ENCODE measurements at regions of chr22 and their contacts with region 1.

Region 1: GRCh38 chr22:32796865-32797573 is 4.5 kb upstream of the TIMP3 start:
- DNase-seq: peak; percentile 64
- ATAC-seq: peak; percentile 65
- H3K4me3 Mint-ChIP-seq: no peak overlapping the region
- H3K27ac Mint-ChIP-seq: no peak overlapping the region
- H3K4me1 Mint-ChIP-seq: no peaks in the 10 kb centered on the region
- H3K27me3 Mint-ChIP-seq: peaks cover 52% of the 10 kb centered on the region

Region 2: DNA sequence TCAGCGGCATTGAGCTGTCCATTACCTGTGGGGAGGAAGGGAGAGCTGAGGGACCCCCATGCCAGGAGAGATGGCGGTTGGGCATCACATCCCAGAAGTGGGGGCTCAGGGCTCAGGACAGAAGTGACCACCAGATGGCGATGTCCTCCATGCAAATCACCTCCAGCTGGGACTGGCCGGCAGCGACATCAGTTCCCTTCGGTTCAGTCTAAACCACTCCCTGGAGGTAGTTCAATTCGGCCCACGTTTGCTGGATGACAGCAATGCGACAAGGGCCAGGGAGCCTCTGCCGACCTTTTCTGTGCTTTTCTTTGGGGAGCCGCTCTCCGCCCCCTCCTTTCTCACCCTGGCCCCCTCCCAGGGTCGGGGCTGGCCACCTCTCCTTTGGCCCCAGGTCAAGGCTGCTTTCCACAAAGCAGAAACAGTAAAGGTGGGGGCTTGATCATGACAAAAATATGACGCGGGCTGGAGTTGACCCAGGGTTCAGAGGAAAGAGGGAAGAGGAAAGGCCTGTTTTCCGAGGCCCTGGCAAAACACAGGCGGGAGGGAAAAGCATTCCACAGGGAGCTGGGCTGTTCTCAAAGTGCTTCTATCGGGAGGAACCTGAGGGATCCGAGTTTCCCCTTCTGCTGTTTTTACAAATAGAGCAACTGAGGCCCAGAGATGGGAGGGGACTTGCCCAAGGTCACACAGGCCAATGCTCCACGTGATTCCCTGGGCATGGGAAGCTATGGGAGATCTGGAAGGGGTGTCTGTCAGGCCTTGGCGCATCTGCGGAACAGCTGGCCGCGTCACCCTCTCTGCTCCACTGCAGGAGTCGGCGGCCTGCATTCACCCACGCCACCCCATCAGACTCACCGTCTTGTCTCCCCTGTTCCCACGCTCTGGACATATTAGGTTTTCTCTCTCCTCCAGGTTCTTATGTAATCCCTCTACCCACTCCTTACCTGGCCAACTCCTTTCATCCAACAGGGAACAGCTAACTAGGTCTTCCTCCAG is 267.7 kb before region 1 on chr22:
- CTCF ChIA-PET with region 1: interaction called, 41 read pairs
- DNase-seq: peak; percentile 77
- ATAC-seq: peak; percentile 76
- H3K4me3 Mint-ChIP-seq: no peak overlapping the region
- H3K27ac Mint-ChIP-seq: no peak overlapping the region
- H3K4me1 Mint-ChIP-seq: no peaks in the 10 kb centered on the region
- H3K27me3 Mint-ChIP-seq: peaks cover 2% of the 10 kb centered on the region

Region 3: GRCh38 chr22:32628628-32629572 is 168.1 kb before region 1 on chr22:
- CTCF ChIA-PET with region 1: interaction called, 11 read pairs
- DNase-seq: no peak
- ATAC-seq: no peak
- H3K4me3 Mint-ChIP-seq: no peak overlapping the region
- H3K27ac Mint-ChIP-seq: no peak overlapping the region
- H3K4me1 Mint-ChIP-seq: peaks cover 31% of the 10 kb centered on the region
- H3K27me3 Mint-ChIP-seq: peaks cover 18% of the 10 kb centered on the region

Region 4: GRCh38 chr22:32660292-32660691 is 136.7 kb before region 1 on chr22:
- CTCF ChIA-PET with region 1: interaction called, 101 read pairs
- DNase-seq: peak; percentile 61
- ATAC-seq: no peak
- H3K4me3 Mint-ChIP-seq: no peak overlapping the region
- H3K27ac Mint-ChIP-seq: no peak overlapping the region
- H3K4me1 Mint-ChIP-seq: no peaks in the 10 kb centered on the region
- H3K27me3 Mint-ChIP-seq: peaks cover 18% of the 10 kb centered on the region

Region 5: GRCh38 chr22:33083212-33083611 is 286.2 kb after region 1 on chr22:
- CTCF ChIA-PET with region 1: no interaction called
- DNase-seq: no peak
- ATAC-seq: no peak
- H3K4me3 Mint-ChIP-seq: no peak overlapping the region
- H3K27ac Mint-ChIP-seq: no peak overlapping the region
- H3K4me1 Mint-ChIP-seq: no peaks in the 10 kb centered on the region
- H3K27me3 Mint-ChIP-seq: no peaks in the 10 kb centered on the region